ENCODE measurements at regions of chr4 and their contacts with region 1.

Region 1: DNA sequence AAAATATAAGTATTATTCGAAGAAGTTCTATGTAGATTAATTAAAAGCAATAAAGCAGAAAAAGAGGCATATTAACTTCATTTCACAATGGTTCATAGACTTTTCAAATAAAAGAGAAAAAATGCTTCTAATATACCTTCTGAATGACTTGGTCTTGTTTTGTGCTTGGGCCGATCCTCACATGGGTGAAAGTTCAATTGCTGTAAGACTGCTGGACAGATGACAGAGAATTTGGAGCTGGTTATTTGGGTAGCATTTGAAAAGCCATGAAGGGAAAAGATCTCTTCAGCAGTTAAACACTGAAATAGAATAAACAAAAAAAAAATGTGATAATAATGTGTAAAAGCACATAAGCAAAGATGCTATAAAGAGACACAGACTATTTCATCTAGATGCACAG is 29.8 kb downstream of the SLC39A8 start:
- DNase-seq: no peak
- ATAC-seq: no peak

Region 2: GRCh38 chr4:100962698-100963097 is 1352.8 kb before region 1 on chr4:
- intact Hi-C with region 1: no loop called
- DNase-seq: no peak
- ATAC-seq: no peak

Region 3: DNA sequence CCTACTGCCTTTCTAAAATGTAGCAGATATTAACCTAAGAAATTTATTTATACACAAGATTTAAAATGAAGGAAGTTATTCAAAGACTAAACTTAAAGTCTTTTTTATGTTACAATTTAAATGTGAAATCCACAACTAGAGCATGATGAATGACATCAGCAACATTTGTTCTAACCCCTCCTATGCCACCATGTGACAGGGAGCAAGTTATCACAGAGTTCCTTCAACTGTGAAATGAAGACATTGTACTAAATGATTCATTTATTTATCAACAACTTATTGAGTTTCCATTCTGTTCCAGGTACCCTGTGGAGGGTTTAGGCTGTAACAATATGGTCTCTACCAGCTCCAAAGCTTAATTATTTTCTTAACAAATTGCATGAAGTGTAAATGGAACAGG is 47.2 kb before region 1 on chr4:
- intact Hi-C with region 1: loop called (anchors 2 kb)
- DNase-seq: no peak
- ATAC-seq: no peak